ENCODE measurements at regions of chr2 and their contacts with region 1.

Region 1: DNA sequence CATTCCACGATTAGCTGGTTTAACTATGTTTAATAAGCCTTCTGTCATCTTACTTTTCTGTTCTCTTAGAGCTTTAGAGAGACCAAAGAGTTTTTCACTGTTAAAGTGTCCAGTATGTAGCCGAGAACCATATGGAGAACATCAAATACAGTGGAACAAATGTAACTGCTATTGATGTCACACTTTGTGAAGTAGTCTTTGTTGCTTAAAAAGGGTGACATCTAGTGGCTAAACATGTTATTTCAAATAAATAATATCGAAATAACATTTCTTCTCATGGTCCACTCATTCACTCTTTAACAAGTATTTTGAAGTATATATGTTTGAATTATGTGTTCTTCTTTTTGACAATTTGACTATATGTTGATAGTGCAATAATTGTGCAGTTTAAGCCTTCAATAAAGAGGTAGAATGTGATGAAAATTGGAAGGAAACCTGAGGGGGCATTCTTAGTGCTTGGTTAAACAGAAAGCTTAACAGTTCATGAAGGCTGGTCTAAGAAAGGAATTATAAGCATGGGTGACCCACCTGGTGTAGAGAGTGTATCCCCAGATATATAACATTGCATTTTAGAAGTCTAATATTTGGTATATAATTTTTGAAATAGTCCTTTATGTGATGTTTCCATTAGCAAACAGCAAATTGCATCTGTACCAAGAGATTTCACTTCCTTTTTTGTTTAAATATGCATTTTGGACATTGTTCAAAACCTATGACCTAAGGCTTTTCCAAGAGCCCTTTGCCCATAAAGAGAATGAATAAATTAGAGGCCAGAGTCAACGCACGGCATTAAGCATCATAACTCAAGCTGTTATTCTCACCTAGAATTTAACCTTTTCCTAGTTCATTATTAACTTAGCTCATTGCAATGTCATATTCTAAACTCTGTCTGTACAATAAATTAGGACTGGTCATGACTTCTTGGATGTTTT is 112.1 kb downstream of the KYNU start:
- DNase-seq: peak; percentile 60
- H3K4me3 ChIP-seq: no peak overlapping the region
- H3K27ac ChIP-seq: no peak overlapping the region
- H3K4me1 ChIP-seq: no peaks in the 10 kb centered on the region
- H3K27me3 ChIP-seq: peaks cover 5% of the 10 kb centered on the region; the same call in 1 of the 2 replicates

Region 2: DNA sequence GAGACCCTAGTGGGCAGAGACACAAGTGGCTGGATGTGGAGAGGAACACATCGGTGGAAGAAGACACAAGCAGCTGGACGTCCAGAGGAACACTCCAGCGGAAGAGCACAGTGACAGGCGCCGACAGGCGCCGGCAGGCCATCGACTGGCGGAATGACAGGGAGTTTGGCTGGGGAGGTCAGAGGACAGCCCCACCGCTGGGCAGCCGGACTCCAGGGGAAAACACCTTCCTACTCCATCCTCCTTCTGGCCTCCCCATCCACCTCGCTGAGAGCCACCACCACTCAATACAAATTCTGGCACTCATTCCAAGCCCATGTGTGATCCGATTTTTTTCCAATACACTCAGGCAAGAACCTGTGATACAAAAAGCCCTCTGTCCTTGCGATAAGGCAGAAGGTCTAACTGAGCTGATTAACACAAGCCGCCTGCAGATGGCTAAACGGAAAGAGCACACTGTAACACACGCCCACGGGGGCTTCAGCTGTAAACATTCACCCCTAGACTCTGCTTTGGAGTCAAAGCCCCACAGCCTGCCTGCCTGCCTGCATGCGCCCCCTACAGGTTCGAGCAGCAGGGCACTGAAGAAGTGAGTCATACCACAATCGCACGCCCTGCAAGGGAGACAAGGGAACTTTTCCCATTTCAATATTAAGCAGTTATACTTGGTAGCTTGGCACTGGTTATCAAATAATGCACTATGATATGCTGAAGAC is 808.6 kb before region 1 on chr2:
- in situ Hi-C with region 1: loop called (anchors 25 kb)
- DNase-seq: peak; percentile 70
- H3K4me3 ChIP-seq: no peak overlapping the region
- H3K27ac ChIP-seq: no peak overlapping the region
- H3K4me1 ChIP-seq: peaks cover 7% of the 10 kb centered on the region
- H3K27me3 ChIP-seq: no peaks in the 10 kb centered on the region

Region 3: DNA sequence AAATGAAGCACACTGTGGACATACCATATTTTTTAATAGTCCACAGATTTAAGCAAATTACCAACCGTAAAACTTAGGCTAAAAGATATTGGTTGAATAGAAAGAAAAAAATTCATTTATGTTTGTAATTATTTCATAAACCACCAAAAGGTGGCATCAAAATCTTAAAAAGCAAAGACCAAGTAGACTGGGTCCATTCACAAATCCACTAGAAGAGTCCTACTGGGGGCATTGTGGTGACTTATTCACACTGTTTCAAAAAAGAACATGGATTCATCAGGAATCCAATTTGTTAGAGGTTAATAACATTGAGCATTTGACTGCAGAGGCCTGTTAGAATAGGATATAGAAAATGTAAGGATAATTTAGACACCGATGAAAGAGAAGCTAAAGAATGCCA is 307.0 kb before region 1 on chr2:
- in situ Hi-C with region 1: loop called (anchors 10 kb)
- DNase-seq: peak; percentile 29
- H3K4me3 ChIP-seq: no peak overlapping the region
- H3K27ac ChIP-seq: no peak overlapping the region
- H3K4me1 ChIP-seq: no peaks in the 10 kb centered on the region
- H3K27me3 ChIP-seq: 0 out of 2 replicates have a peak, but pooled peaks cover 4% of the 10 kb centered on the region

Region 4: DNA sequence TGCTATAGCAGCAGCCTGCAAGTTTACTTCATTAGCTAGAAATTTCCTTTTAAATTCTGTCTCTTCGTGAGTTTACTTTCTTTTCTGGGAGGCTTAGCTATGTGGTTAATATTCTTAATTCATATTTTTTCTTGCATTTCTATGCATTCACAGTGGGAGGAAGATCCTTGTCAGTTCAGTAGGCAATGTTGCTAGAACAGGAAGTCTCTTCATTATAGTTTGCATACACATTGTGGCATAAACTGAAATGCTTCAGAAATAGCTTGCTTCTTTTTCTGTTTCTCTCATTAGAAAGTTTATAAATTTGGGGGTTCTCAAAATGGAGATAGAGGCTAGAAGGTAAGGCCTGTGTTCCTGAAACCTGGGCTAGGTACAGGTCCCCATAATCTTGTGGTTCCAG is 131.5 kb after region 1 on chr2:
- in situ Hi-C with region 1: no loop called
- DNase-seq: no peak
- H3K4me3 ChIP-seq: no peak overlapping the region
- H3K27ac ChIP-seq: no peak overlapping the region
- H3K4me1 ChIP-seq: no peaks in the 10 kb centered on the region
- H3K27me3 ChIP-seq: peaks cover 14% of the 10 kb centered on the region; the same call in 1 of the 2 replicates

Region 5: DNA sequence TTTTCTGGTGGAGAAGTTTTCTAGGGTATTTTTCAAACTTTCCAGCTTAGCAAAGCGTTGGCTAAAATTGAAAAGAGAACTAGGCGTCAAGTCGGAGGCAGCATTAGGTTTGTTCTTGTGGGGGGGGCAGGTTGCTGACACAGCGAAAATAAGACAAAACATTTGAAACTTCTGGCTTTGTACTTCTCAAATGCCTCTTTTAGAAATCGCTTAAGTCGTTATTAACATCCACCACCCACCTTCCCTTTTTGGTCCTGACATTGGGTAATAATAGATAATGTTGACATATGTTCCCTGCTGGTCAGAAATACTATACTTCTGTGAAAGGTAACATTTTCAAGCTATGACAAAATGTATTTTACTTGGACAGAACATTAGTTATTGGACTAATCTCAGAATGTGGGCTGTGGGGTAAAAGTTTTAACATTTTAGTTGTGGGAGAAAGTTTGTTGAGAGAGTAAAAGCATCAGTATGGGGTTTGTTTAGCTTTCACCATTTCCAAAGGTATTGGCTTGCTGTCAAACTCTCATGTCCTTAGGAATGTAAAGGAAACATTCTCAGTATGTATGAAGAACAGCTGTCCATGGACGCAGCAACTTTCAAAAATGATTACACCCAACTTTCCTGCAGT is 1618.5 kb after region 1 on chr2:
- in situ Hi-C with region 1: no loop called
- DNase-seq: peak; percentile 15
- H3K4me3 ChIP-seq: no peak overlapping the region
- H3K27ac ChIP-seq: no peak overlapping the region
- H3K4me1 ChIP-seq: peaks cover 7% of the 10 kb centered on the region; the same call in 1 of the 2 replicates
- H3K27me3 ChIP-seq: no peaks in the 10 kb centered on the region